ENCODE measurements at regions of chr14 and their contacts with region 1.

Region 1: GRCh38 chr14:32648434-32648833 is 290.2 kb upstream of the NPAS3 start:
- DNase-seq: peak; percentile 90
- ATAC-seq: peak; percentile 96
- H3K4me3 ChIP-seq: no peak overlapping the region
- H3K27ac ChIP-seq: no peak overlapping the region
- H3K4me1 ChIP-seq: peaks cover 26% of the 10 kb centered on the region
- H3K27me3 ChIP-seq: no peaks in the 10 kb centered on the region
- CTCF ChIP-seq: no peak

Region 2: GRCh38 chr14:32669391-32669790 is 21.0 kb after region 1 on chr14:
- CTCF ChIA-PET with region 1: no interaction called
- POLR2A ChIA-PET with region 1: no interaction called
- intact Hi-C with region 1: loop called (anchors 2 kb)
- DNase-seq: no peak
- ATAC-seq: no peak
- H3K4me3 ChIP-seq: no peak overlapping the region
- H3K27ac ChIP-seq: no peak overlapping the region
- H3K4me1 ChIP-seq: no peaks in the 10 kb centered on the region
- H3K27me3 ChIP-seq: no peaks in the 10 kb centered on the region
- CTCF ChIP-seq: no peak

Region 3: GRCh38 chr14:32693114-32693513 is 44.7 kb after region 1 on chr14:
- CTCF ChIA-PET with region 1: no interaction called
- POLR2A ChIA-PET with region 1: no interaction called
- intact Hi-C with region 1: loop called (anchors 2 kb)
- DNase-seq: peak; percentile 94
- ATAC-seq: peak; percentile 91
- H3K4me3 ChIP-seq: peak overlapping the region; percentile 50
- H3K27ac ChIP-seq: peak overlapping the region; percentile 94
- H3K4me1 ChIP-seq: peaks cover 37% of the 10 kb centered on the region
- H3K27me3 ChIP-seq: no peaks in the 10 kb centered on the region
- CTCF ChIP-seq: no peak

Region 4: GRCh38 chr14:32826404-32827082 is 178.1 kb after region 1 on chr14:
- CTCF ChIA-PET with region 1: no interaction called
- POLR2A ChIA-PET with region 1: no interaction called
- intact Hi-C with region 1: no loop called
- DNase-seq: peak; percentile 30
- ATAC-seq: no peak
- H3K4me3 ChIP-seq: no peak overlapping the region
- H3K27ac ChIP-seq: no peak overlapping the region
- H3K4me1 ChIP-seq: peaks cover 30% of the 10 kb centered on the region
- H3K27me3 ChIP-seq: no peaks in the 10 kb centered on the region
- CTCF ChIP-seq: peak; percentile 28; the same call in 1 of the 2 replicates